ENCODE measurements at regions of chr11 and their contacts with region 1.

Region 1: GRCh38 chr11:62905927-62906531 is 15.1 kb downstream of the CHRM1 start:
- DNase-seq: peak; percentile 88
- ATAC-seq: peak; percentile 82
- H3K4me3 Mint-ChIP-seq: no peak overlapping the region
- H3K27ac Mint-ChIP-seq: no peak overlapping the region
- H3K4me1 Mint-ChIP-seq: peaks cover 22% of the 10 kb centered on the region
- H3K27me3 Mint-ChIP-seq: peaks cover 8% of the 10 kb centered on the region

Region 2: GRCh38 chr11:62922658-62923431 is 16.8 kb after region 1 on chr11:
- CTCF ChIA-PET with region 1: interaction called, 32 read pairs
- POLR2A ChIA-PET with region 1: no interaction called
- intact Hi-C with region 1: loop called (anchors 1 to 2 kb)
- DNase-seq: peak; percentile 83
- ATAC-seq: peak; percentile 68
- H3K4me3 Mint-ChIP-seq: peak overlapping the region; percentile 59
- H3K27ac Mint-ChIP-seq: peak overlapping the region; percentile 7
- H3K4me1 Mint-ChIP-seq: peaks cover 32% of the 10 kb centered on the region
- H3K27me3 Mint-ChIP-seq: peaks cover 57% of the 10 kb centered on the region

Region 3: GRCh38 chr11:62974848-62975522 is 69.0 kb after region 1 on chr11:
- CTCF ChIA-PET with region 1: interaction called, 36 read pairs
- POLR2A ChIA-PET with region 1: no interaction called
- intact Hi-C with region 1: loop called (anchors 1 to 2 kb)
- DNase-seq: peak; percentile 59
- ATAC-seq: peak; percentile 73
- H3K4me3 Mint-ChIP-seq: no peak overlapping the region
- H3K27ac Mint-ChIP-seq: no peak overlapping the region
- H3K4me1 Mint-ChIP-seq: no peaks in the 10 kb centered on the region
- H3K27me3 Mint-ChIP-seq: peaks cover 5% of the 10 kb centered on the region

Region 4: GRCh38 chr11:63012430-63012829 is 106.4 kb after region 1 on chr11:
- CTCF ChIA-PET with region 1: interaction called, 283 read pairs
- POLR2A ChIA-PET with region 1: interaction called, 3 read pairs
- intact Hi-C with region 1: no loop called
- DNase-seq: no peak
- ATAC-seq: no peak
- H3K4me3 Mint-ChIP-seq: no peak overlapping the region
- H3K27ac Mint-ChIP-seq: no peak overlapping the region
- H3K4me1 Mint-ChIP-seq: no peaks in the 10 kb centered on the region
- H3K27me3 Mint-ChIP-seq: peaks cover 3% of the 10 kb centered on the region

Region 5: GRCh38 chr11:63023841-63024648 is 118.0 kb after region 1 on chr11:
- CTCF ChIA-PET with region 1: interaction called, 283 read pairs
- POLR2A ChIA-PET with region 1: interaction called, 3 read pairs
- intact Hi-C with region 1: loop called (anchors 1 kb)
- DNase-seq: peak; percentile 93
- ATAC-seq: peak; percentile 84
- H3K4me3 Mint-ChIP-seq: no peak overlapping the region
- H3K27ac Mint-ChIP-seq: no peak overlapping the region
- H3K4me1 Mint-ChIP-seq: peaks cover 4% of the 10 kb centered on the region
- H3K27me3 Mint-ChIP-seq: peaks cover 10% of the 10 kb centered on the region

Region 6: GRCh38 chr11:63032457-63032856 is 126.4 kb after region 1 on chr11:
- CTCF ChIA-PET with region 1: interaction called, 33 read pairs
- POLR2A ChIA-PET with region 1: no interaction called
- intact Hi-C with region 1: no loop called
- DNase-seq: no peak
- ATAC-seq: no peak
- H3K4me3 Mint-ChIP-seq: no peak overlapping the region
- H3K27ac Mint-ChIP-seq: no peak overlapping the region
- H3K4me1 Mint-ChIP-seq: peaks cover 2% of the 10 kb centered on the region
- H3K27me3 Mint-ChIP-seq: peaks cover 25% of the 10 kb centered on the region

Region 7: DNA sequence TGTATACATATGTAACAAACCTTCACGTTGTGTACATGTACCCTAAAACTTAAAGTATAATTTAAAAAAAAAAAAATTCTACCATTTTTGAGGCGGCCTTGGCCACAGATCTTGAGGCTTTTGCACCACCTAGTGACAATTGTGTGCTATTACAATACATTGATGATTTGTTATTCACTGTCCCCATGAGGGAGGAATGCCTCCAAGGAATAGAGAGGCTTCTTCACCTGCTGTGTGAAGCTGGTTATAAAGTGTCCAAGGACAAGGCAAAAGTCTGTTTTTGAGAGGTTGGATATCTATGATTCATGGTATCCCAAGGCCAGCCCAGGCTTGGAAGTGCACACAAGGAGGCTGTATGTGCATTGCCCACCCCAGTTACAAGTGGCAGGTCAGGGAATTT is 306.7 kb after region 1 on chr11:
- CTCF ChIA-PET with region 1: interaction called, 8 read pairs
- POLR2A ChIA-PET with region 1: no interaction called
- intact Hi-C with region 1: loop called (anchors 1 to 5 kb)
- DNase-seq: peak; percentile 26
- ATAC-seq: no peak
- H3K4me3 Mint-ChIP-seq: no peak overlapping the region
- H3K27ac Mint-ChIP-seq: no peak overlapping the region
- H3K4me1 Mint-ChIP-seq: no peaks in the 10 kb centered on the region
- H3K27me3 Mint-ChIP-seq: peaks cover 19% of the 10 kb centered on the region

Measured in activated CD4-positive, alpha-beta T cell treated with anti-CD3 and anti-CD28 coated beads for 36 hours (primary cell).